WTC11 (cell line): ENCODE measurements at regions of chr3 and their contacts with region 1.

Region 1: GRCh38 chr3:57007513-57008460 is 52.7 kb upstream of the SPATA12 start:
- DNase-seq: no peak
- ATAC-seq: peak; percentile 59
- H3K4me3 Mint-ChIP-seq: no peak overlapping the region
- H3K27ac Mint-ChIP-seq: peak overlapping the region; percentile 1; the same call in 1 of the 2 replicates
- H3K4me1 Mint-ChIP-seq: peaks cover 25% of the 10 kb centered on the region
- H3K27me3 Mint-ChIP-seq: no peaks in the 10 kb centered on the region
- CTCF ChIP-seq: no peak

Region 2: DNA sequence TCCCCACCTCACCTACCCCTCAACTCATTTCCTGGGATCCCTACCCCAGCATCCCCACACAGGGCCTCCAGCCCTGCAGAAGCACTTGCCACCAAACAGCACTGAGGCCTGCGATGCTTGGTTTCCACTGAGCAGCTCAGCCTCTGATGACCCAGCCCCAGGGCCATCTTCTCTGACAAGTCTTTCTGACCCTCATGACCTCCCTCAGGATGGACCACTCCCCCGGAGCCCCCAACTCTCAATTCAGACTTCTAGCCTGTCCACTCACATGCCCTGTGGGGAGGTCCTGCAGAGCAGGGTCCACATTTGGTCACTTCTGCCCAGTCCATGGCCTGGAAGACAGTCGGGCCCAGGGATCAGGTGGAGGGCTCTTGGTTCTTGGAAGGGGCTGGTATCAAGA is 10.7 kb before region 1 on chr3:
- CTCF ChIA-PET with region 1: interaction called, 14 read pairs
- POLR2A ChIA-PET with region 1: no interaction called
- DNase-seq: no peak
- ATAC-seq: no peak
- H3K4me3 Mint-ChIP-seq: no peak overlapping the region
- H3K27ac Mint-ChIP-seq: no peak overlapping the region
- H3K4me1 Mint-ChIP-seq: peaks cover 14% of the 10 kb centered on the region
- H3K27me3 Mint-ChIP-seq: no peaks in the 10 kb centered on the region
- CTCF ChIP-seq: no peak

Region 3: GRCh38 chr3:57029924-57030323 is 22.1 kb after region 1 on chr3:
- CTCF ChIA-PET with region 1: no interaction called
- POLR2A ChIA-PET with region 1: no interaction called
- DNase-seq: no peak
- ATAC-seq: no peak
- H3K4me3 Mint-ChIP-seq: no peak overlapping the region
- H3K27ac Mint-ChIP-seq: peak overlapping the region; percentile 34; the same call in 1 of the 2 replicates
- H3K4me1 Mint-ChIP-seq: no peaks in the 10 kb centered on the region
- H3K27me3 Mint-ChIP-seq: no peaks in the 10 kb centered on the region
- CTCF ChIP-seq: no peak